Mammary epithelial cell (primary cell): ENCODE measurements at regions of chr14 and their contacts with region 1.

Region 1: GRCh38 chr14:58738189-58738836 is 100.6 kb downstream of the DACT1 start:
- DNase-seq: peak; percentile 81
- H3K4me3 ChIP-seq: no peak overlapping the region
- H3K27ac ChIP-seq: peak overlapping the region; percentile 45
- H3K4me1 ChIP-seq: peaks cover 18% of the 10 kb centered on the region
- H3K27me3 ChIP-seq: no peaks in the 10 kb centered on the region
- CTCF ChIP-seq: no peak

Region 2: DNA sequence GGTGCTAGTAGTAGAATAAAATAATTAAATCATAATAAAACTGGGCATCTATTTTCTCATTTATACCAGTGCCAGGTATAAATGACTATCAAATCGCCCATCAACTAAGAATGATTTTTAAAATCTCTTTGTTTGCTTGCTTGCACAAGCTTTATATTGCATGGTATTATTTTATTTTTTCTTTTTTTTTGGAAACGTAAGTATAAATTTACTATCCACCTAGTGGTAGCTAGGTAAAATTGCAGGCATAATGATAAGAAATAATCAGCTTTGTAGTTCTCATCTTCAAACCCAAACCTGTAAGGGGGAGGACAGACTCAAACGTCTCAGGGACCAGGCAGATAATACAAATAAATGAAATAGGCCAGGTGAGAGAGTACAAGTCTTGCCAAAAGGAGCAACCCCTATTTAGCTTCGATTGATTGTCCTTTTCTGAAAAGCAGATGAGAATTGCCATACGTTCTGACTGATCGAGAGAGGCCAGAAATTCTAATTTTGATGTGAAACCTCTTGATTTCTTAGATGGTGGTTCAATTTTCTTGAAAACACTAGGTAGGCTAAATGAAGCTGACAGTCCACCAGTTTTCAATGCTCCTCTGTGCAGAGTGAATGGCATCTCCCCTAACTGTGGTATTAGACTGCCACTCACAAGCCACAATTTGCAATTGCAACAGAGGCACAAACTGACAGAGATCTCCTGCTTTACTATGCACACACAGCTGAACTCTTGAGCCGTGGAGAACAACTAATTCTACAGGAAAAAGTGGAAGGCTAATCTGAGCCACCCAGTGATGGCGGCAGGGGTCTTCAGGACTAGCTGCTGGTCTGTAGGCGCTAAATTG is 88.8 kb after region 1 on chr14:
- CTCF ChIA-PET with region 1: no interaction called
- dilution Hi-C with region 1: loop called (anchors 5 kb)
- in situ Hi-C with region 1: no loop called
- intact Hi-C with region 1: no loop called
- DNase-seq: no peak
- H3K4me3 ChIP-seq: no peak overlapping the region
- H3K27ac ChIP-seq: no peak overlapping the region
- H3K4me1 ChIP-seq: peaks cover 6% of the 10 kb centered on the region
- H3K27me3 ChIP-seq: no peaks in the 10 kb centered on the region
- CTCF ChIP-seq: peak; percentile 16 to 44